Activated naive CD4-positive, alpha-beta T cell treated with anti-CD3 and anti-CD28 coated beads for 36 hours (primary cell): ENCODE measurements at regions of chr6 and their contacts with region 1.

Region 1: DNA sequence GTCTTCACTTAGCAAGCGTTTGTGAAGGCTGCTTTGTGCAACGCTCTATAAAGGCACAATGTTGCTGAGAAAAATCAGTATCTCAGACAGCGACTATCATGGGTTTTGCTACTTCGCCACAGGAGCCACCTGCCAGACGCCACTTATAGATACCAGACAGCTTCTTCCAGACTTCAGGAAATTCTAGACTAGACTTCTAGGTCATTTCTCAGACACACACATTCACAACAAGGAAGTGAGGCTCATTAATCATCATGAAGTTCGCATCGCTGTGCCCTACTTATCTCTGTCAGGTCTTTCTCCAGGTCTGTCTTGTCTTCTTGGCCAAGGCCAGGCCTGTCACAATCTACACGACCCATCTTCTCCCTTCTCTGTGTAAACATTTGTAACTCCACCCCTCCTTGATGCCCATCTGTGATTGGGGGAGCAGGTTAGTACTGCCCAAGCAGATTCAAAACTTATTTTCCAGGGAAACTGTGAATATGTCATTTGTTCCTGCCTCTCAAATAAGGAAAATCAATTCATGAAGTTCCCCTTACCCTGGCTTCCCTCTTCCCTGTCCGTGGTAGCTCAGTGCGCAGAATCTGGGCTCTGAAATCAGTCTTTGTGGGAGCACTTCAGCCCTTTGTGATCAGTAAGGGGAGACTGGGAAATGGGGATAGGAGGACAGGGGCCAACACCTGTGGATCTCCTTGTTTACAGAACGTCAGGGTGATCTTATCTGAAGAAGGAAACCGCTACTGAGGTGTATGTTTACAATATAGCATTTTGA is 115.5 kb downstream of the TNFAIP3 start:
- DNase-seq: no peak
- H3K4me3 Mint-ChIP-seq: no peak overlapping the region
- H3K27ac Mint-ChIP-seq: no peak overlapping the region
- H3K4me1 Mint-ChIP-seq: peaks cover 13% of the 10 kb centered on the region
- H3K27me3 Mint-ChIP-seq: no peaks in the 10 kb centered on the region

Region 2: GRCh38 chr6:137233911-137234863 is 748.4 kb before region 1 on chr6:
- CTCF ChIA-PET with region 1: no interaction called
- intact Hi-C with region 1: loop called (anchors 10 kb)
- DNase-seq: peak; percentile 21
- H3K4me3 Mint-ChIP-seq: no peak overlapping the region
- H3K27ac Mint-ChIP-seq: peak overlapping the region; percentile 28
- H3K4me1 Mint-ChIP-seq: peaks cover 38% of the 10 kb centered on the region
- H3K27me3 Mint-ChIP-seq: peaks cover 5% of the 10 kb centered on the region

Region 3: DNA sequence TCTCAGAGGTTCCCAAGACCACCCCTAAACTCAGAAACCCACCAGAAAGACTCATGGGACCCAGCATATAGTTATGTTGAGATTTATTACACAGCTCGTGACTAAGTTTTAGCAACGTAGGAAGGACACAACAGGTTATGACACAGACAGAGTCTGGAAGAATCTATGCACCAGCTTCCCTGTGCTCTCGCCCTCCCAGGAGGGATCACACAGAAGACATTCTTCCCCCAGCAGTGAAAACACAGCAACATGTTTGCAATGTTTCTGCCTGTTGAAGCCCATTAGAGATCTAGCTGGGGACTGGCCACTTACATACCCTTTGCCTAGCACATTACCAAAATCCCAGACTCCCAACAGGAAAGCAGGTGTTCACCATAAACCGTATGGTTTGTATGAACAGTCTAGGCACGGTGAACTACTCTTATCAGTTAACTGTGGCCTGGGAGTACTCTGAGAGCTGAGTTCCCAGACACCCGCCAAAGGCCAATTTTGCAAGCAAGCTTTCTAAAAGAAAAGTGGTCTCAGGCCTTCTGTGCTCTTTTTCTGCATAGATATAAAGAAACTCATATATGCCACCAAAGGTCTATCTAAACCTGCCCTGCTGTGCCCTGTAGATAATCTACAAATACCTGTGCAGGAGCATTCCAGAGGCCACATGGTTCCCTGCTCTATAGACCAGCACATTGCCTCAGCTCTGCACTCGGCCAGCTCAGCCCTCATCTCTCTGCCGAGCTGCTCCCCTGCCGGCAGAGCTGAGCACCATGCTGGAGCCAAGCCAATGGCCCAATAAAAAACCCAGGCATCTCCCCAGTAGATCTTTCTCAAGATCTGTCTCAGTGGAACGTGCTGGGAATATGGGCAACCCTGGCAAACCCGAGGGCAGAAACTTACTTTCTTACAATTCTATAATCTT is 325.5 kb after region 1 on chr6:
- CTCF ChIA-PET with region 1: no interaction called
- intact Hi-C with region 1: no loop called
- DNase-seq: no peak
- H3K4me3 Mint-ChIP-seq: no peak overlapping the region
- H3K27ac Mint-ChIP-seq: no peak overlapping the region
- H3K4me1 Mint-ChIP-seq: no peaks in the 10 kb centered on the region
- H3K27me3 Mint-ChIP-seq: no peaks in the 10 kb centered on the region

Region 4: DNA sequence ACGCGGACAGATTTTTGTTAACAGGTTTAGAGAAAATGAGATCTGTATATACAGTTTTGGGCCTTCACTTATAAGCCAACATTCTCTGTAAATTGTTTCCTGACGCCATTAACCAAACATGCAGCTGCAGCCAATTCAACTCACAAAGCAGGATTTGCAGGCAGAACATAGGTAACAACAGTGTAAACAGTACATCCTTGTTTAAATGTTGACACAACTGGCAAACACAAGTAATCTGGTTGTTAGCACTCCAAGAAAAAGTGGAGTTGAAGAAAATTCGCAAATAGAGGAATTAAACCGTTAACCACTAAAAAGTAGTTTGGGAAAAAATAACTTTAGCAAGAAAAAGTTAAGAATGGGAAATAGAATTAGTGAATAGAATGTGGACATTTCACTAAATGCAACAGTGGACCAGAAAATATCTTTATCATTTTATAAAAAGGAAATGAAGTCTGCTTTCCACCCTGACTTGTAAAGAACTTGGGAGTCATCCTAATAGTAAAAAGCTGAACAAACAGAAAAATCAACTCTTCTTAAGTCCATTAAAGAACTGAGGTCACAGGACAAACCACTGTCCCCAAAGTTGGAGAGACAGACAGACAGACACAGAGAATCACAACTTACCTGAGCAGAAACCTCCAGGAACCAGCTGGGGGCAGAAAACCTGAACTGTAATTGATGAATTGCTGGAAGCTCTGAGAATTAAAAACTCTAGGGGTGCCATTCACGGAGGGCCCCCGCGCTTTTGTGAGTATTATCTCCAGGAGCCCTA is 405.2 kb after region 1 on chr6:
- CTCF ChIA-PET with region 1: no interaction called
- intact Hi-C with region 1: no loop called
- DNase-seq: no peak
- H3K4me3 Mint-ChIP-seq: no peak overlapping the region
- H3K27ac Mint-ChIP-seq: no peak overlapping the region
- H3K4me1 Mint-ChIP-seq: no peaks in the 10 kb centered on the region
- H3K27me3 Mint-ChIP-seq: no peaks in the 10 kb centered on the region